ENCODE measurements at regions of chr12 and their contacts with region 1.

Region 1: DNA sequence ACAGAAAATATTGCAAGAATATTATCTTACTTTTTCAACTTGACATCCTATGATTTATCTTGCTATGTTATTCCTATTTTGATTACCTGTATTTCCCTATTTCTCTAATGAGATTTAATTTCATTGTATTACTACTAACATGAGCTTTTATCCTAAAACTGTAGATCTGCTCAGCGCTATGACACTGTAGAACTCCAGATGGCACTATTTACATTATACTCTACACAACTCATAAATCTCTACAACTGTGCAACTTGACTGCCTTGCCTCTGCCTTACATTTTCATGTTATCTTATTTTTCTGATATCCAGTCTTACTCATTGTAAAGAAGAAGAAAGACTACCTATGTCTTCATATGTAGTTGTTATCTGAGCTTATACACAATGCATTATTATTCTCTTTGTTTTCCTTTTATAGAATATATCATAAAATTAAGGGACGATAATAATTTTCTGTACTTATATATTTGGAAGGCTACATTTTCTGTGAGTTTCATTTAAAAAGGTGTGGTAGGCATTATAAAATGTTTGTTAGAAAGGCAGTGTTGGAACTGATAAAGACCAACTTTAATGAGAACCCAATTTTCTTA is 24.1 kb downstream of the NUP37 start:
- DNase-seq: no peak
- H3K4me3 ChIP-seq: no peak overlapping the region
- H3K27ac ChIP-seq: no peak overlapping the region
- H3K27me3 ChIP-seq: no peaks in the 10 kb centered on the region
- CTCF ChIP-seq: peak in 54 of 56 donors; percentile 14 to 69 (median 47)

Region 2: GRCh38 chr12:102735104-102735503 is 639.3 kb after region 1 on chr12:
- intact Hi-C with region 1: loop called in 1 of 2 experiments (anchors 10 kb)
- DNase-seq: no peak
- H3K4me3 ChIP-seq: no peak overlapping the region
- H3K27ac ChIP-seq: no peak overlapping the region
- H3K27me3 ChIP-seq: peaks cover 0 to 7% (median 0%) of the 10 kb centered on the region in 45 donors
- CTCF ChIP-seq: no peak

Measured in dorsolateral prefrontal cortex (tissue), 120 donors.